Gastrocnemius medialis (tissue), 4 donors: ENCODE measurements at regions of chr1 and their contacts with region 1.

Region 1: GRCh38 chr1:154324669-154325582 is at the start of gene ATP8B2:
- DNase-seq: peak; percentile 50 to 60
- ATAC-seq: peak; percentile 45 to 63
- H3K4me3 ChIP-seq: peak within 1 kb of the TSS; percentile 48 to 58 (median 56)
- H3K27ac ChIP-seq: peak within 1 kb of the TSS; percentile 43 to 80 (median 76)
- H3K4me1 ChIP-seq: peaks cover 21 to 28% of the 10 kb centered on the region in 2 donors
- H3K27me3 ChIP-seq: peaks cover 23 to 29% (median 28%) of the 10 kb centered on the region in 3 donors
- CTCF ChIP-seq: peak; percentile 72 to 92 (median 88)
- POLR2A ChIP-seq: no peak
- total RNA-seq, gene ATP8B2: 5.8 to 22.5 (median 7.2) TPM

Region 2: GRCh38 chr1:154014154-154014910 is 310.6 kb before region 1 on chr1:
- in situ Hi-C with region 1: loop called in 1 of 4 experiments (anchors 25 kb)
- intact Hi-C with region 1: no loop called
- DNase-seq: no peak
- ATAC-seq: no peak
- H3K4me3 ChIP-seq: no peak overlapping the region
- H3K27ac ChIP-seq: no peak overlapping the region
- H3K4me1 ChIP-seq: no peaks in the 10 kb centered on the region
- H3K27me3 ChIP-seq: no peaks in the 10 kb centered on the region
- CTCF ChIP-seq: no peak
- POLR2A ChIP-seq: no peak

Region 3: DNA sequence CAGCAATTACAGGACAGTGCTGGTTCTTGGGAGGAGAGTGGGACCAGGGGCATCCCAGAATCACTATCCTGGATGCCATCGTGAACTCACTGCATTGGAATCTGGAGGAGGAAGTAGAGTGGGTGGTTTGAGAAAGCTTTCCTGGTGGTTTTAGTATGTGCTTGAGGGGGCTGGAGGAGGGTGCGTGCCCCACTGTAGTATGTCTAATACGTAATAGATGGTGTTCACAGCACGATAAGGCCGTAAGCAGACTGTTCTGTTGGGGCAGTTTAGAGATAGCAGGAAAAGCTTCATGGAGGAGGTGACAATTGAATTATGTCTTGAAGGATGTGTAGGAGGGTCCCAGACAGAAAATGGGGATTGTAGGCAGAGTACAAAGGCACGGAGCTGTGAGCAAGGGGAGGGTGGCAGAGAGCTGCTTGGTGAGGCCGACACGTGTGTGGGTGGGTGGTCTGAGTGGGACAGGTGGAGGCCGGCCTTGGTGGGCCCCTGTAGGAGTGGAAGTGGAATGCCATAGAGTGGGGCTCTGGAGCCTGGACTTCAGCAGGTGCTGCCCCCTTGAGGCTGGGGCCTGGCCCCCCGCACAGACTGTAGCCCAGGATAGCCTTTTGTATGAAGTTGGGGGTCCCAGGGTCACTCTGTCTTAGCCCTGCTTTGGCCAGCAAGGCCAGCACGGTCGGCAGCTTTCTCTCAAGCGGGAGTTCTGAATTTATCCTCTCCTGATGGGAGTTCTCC is 117.2 kb after region 1 on chr1:
- in situ Hi-C with region 1: no loop called
- intact Hi-C with region 1: loop called (anchors 5 kb)
- DNase-seq: no peak
- ATAC-seq: no peak
- H3K4me3 ChIP-seq: no peak overlapping the region
- H3K27ac ChIP-seq: peak overlapping the region; percentile 41 to 76 (median 66)
- H3K4me1 ChIP-seq: peaks cover 10% of the 10 kb centered on the region in 2 donors
- H3K27me3 ChIP-seq: no peaks in the 10 kb centered on the region
- CTCF ChIP-seq: peak in 4 of 5 experiments; percentile 43 to 63 (median 51)
- POLR2A ChIP-seq: no peak